IMR-90 (cell line): ENCODE measurements at regions of chr4 and their contacts with region 1.

Region 1: GRCh38 chr4:153142700-153143438 is 61.4 kb upstream of the TRIM2 start:
- DNase-seq: peak; percentile 73
- ATAC-seq: peak; percentile 83
- H3K4me3 ChIP-seq: no peak overlapping the region
- H3K27ac ChIP-seq: no peak overlapping the region
- H3K4me1 ChIP-seq: peaks cover 1% of the 10 kb centered on the region; the same call in 1 of the 2 replicates
- H3K27me3 ChIP-seq: no peaks in the 10 kb centered on the region
- CTCF ChIP-seq: peak; percentile 94
- POLR2A ChIP-seq: no peak
- RAD21 ChIP-seq: peak; percentile 96

Region 2: GRCh38 chr4:153159728-153160221 is 16.9 kb after region 1 on chr4:
- CTCF ChIA-PET with region 1: interaction called, 13 read pairs
- POLR2A ChIA-PET with region 1: no interaction called
- dilution Hi-C with region 1: no loop called
- in situ Hi-C with region 1: no loop called
- intact Hi-C with region 1: no loop called
- DNase-seq: peak; percentile 76
- ATAC-seq: peak; percentile 72
- H3K4me3 ChIP-seq: no peak overlapping the region
- H3K27ac ChIP-seq: no peak overlapping the region
- H3K4me1 ChIP-seq: 0 out of 2 replicates have a peak, but pooled peaks cover 2% of the 10 kb centered on the region
- H3K27me3 ChIP-seq: peaks cover 3% of the 10 kb centered on the region
- CTCF ChIP-seq: no peak
- POLR2A ChIP-seq: no peak
- RAD21 ChIP-seq: no peak

Region 3: DNA sequence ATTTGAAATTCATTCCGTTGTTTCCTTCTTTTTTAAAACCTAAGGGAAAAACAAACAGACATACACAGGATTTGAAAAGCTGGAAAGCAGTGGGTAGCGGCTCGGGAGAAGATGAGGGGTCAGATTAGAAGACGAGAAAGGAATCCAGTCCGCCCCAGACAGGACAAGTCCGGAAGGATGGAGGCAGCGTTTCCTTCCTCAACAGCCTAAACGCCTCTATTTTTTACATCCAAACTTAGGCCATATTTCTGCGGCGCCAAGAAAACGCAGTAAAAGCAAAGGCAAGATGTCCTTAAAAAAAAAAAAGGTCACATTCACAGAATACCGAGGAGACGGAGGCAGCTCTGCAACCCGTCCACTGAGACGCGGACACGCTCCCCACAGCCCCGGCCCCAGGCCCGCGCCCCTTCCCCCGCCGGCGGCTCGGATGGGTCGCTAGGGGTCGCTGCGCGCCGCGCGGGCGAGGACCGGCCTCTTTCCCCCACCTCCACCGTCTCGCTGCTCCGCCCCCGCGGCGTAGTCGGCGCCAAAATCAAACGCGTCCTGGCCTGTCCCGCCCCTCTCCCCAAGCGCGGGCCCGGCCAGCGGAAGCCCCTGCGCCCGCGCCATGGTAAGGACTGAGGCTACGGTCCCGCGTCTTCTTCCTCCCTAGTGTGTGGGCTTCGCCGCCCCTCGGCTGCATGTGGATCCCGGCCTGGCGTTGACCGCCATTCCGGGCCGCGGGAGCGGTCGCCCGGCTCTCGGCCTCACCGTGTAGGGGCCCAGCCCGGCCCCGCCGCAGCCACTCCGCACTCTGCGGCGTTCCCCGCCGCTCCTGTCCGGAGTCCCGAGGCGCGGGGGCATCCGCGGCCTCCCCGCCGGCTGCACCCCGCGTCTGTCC is 201.5 kb after region 1 on chr4 and contains the start of gene MND1:
- CTCF ChIA-PET with region 1: interaction called, 3 read pairs
- POLR2A ChIA-PET with region 1: no interaction called
- dilution Hi-C with region 1: no loop called
- in situ Hi-C with region 1: no loop called
- intact Hi-C with region 1: loop called (anchors 1 kb)
- DNase-seq: peak; percentile 71
- ATAC-seq: peak; percentile 91
- H3K4me3 ChIP-seq: peak within 1 kb of the TSS; percentile 75
- H3K27ac ChIP-seq: peak within 1 kb of the TSS; percentile 53
- H3K4me1 ChIP-seq: peaks cover 5% of the 10 kb centered on the region; the same call in 1 of the 2 replicates
- H3K27me3 ChIP-seq: no peaks in the 10 kb centered on the region
- CTCF ChIP-seq: peak; percentile 90
- POLR2A ChIP-seq: peak; percentile 28; the same call in 1 of the 2 replicates
- RAD21 ChIP-seq: peak; percentile 84
- total RNA-seq, gene MND1: 0.36 and 3.3 TPM in 2 replicates

Region 4: GRCh38 chr4:153573881-153574802 is 431.3 kb after region 1 on chr4:
- CTCF ChIA-PET with region 1: interaction called, 3 read pairs
- POLR2A ChIA-PET with region 1: no interaction called
- dilution Hi-C with region 1: no loop called
- in situ Hi-C with region 1: loop called (anchors 5 kb)
- intact Hi-C with region 1: loop called (anchors 1 kb)
- DNase-seq: peak; percentile 88
- ATAC-seq: peak; percentile 97
- H3K4me3 ChIP-seq: no peak overlapping the region
- H3K27ac ChIP-seq: no peak overlapping the region
- H3K4me1 ChIP-seq: no peaks in the 10 kb centered on the region
- H3K27me3 ChIP-seq: no peaks in the 10 kb centered on the region
- CTCF ChIP-seq: peak; percentile 82
- POLR2A ChIP-seq: no peak
- RAD21 ChIP-seq: peak; percentile 93

Region 5: DNA sequence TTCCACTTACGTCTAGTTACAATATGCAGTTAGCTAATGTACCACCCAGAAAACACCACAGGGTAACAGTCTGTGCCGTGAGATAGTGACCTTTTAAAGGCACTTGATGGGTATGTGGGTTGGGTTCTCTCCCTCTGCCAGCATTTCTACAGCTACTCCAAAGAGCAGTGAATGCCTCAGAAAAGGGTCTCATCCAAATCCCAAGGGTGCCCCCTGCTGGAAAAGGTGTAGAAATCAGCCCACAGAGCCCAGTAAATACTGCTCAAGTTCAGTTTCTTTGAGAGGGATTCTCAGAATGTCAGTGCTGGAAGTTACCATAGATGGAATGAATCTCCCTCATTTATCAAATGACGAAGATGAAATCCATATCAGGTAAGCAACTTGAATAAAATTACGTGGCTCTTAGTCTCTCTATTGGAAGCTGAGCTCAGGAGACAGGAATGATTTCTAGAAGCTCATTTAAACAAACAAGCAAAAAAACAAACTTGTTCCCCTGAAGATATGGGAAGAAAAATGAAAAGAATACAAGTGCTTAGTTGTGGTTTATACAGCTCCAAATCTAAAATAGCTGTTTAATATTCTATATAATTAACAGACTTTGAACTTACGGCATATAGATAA is 607.4 kb after region 1 on chr4:
- CTCF ChIA-PET with region 1: no interaction called
- POLR2A ChIA-PET with region 1: no interaction called
- dilution Hi-C with region 1: no loop called
- in situ Hi-C with region 1: no loop called
- intact Hi-C with region 1: loop called (anchors 2 kb)
- DNase-seq: peak; percentile 58
- ATAC-seq: peak; percentile 90
- H3K4me3 ChIP-seq: no peak overlapping the region
- H3K27ac ChIP-seq: no peak overlapping the region
- H3K4me1 ChIP-seq: no peaks in the 10 kb centered on the region
- H3K27me3 ChIP-seq: no peaks in the 10 kb centered on the region; the same call in 1 of the 2 replicates
- CTCF ChIP-seq: peak; percentile 69
- POLR2A ChIP-seq: no peak
- RAD21 ChIP-seq: peak; percentile 63